HCT116 (cell line): ENCODE measurements at regions of chr3 and their contacts with region 1.

Region 1: DNA sequence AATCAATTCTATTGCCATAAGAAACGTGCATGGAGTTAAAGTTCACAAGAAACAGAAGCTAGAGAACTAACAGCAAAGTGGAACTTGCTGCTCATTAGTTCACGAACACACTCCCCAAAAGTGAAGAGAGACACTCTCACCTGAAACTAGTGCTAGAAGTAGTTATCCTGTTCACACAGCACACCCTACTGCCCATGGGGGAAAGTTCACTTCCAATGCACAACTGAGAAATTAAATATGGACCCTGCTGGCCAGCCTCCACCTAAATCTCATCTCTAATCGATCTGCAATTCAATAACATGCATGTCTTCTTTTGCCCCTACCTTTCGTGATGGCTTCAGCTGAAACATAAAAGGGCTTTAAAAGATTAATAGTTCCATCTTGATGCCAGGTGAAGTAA is 39.4 kb upstream of the FRMD4B start:
- DNase-seq: peak; percentile 21
- ATAC-seq: peak; percentile 82
- H3K4me3 ChIP-seq: no peak overlapping the region
- H3K27ac ChIP-seq: no peak overlapping the region
- H3K4me1 ChIP-seq: peaks cover 0 to 4% of the 10 kb centered on the region in 2 experiments; a peak in 1 of 4 replicates
- H3K27me3 ChIP-seq: no peaks in the 10 kb centered on the region
- CTCF ChIP-seq: peak; percentile 34 to 60 (median 56); a peak in 5 of 6 replicates
- POLR2A ChIP-seq: no peak
- RAD21 ChIP-seq: peak; percentile 60

Region 2: DNA sequence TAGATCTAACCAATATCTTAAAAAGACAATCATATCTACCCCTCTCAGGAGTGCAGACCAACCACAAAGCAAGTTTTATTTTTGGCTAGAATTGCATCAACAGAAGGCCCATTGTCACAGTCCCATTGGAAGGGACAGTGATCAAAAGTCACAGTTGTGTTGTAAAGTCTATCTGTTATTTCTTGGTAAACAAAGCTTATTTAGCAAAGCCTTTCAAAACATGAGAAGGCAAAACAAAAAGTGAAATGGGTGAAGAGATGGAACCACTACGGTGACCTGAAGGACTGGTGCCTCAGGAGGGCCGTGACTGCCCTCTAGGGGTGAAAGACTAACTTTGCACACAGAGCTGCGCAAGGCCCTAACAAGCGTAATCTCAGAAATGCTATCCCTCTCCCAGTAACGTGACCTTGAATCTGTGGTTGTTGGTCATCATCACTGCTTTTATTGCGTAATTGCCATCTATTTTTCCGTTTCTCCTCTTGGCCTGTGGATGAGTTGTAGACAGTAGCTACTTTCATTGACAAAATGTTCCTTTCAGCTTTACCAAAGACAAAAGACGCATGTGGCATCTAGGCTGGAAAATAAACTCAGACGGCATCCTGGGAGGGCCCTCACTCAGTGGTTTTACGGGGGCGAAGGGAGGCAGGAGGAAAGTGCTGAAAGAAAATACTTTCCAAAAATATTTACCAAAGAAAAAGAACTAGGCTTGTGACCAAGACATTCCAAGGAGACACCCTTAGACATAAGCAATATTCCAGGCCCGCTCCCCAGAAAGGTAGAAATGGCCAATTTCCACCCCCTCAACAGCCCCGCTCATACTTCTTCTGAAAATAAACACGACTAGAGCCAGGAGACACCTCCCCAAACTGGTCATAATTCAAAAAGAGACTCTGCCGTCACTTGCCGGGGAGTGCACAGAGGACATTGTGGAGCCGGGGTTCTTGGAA is 118.7 kb before region 1 on chr3:
- CTCF ChIA-PET with region 1: interaction called, 10 read pairs
- POLR2A ChIA-PET with region 1: no interaction called
- RAD21 ChIA-PET with region 1: interaction called in 1 of 2 experiments, 3 read pairs
- intact Hi-C with region 1: no loop called
- DNase-seq: peak; percentile 59
- ATAC-seq: peak; percentile 99
- H3K4me3 ChIP-seq: no peak overlapping the region
- H3K27ac ChIP-seq: no peak overlapping the region
- H3K4me1 ChIP-seq: 0 out of 4 replicates have a peak, but pooled peaks cover 0 to 3% of the 10 kb centered on the region in 2 experiments
- H3K27me3 ChIP-seq: no peaks in the 10 kb centered on the region
- CTCF ChIP-seq: peak; percentile 80 to 93 (median 89)
- POLR2A ChIP-seq: no peak
- RAD21 ChIP-seq: peak; percentile 91

Region 3: GRCh38 chr3:69324362-69325025 is 100.8 kb before region 1 on chr3:
- CTCF ChIA-PET with region 1: interaction called, 4 read pairs
- POLR2A ChIA-PET with region 1: no interaction called
- RAD21 ChIA-PET with region 1: no interaction called
- intact Hi-C with region 1: loop called (anchors 1 kb)
- DNase-seq: no peak
- ATAC-seq: peak; percentile 80
- H3K4me3 ChIP-seq: no peak overlapping the region
- H3K27ac ChIP-seq: no peak overlapping the region
- H3K4me1 ChIP-seq: no peaks in the 10 kb centered on the region
- H3K27me3 ChIP-seq: no peaks in the 10 kb centered on the region
- CTCF ChIP-seq: peak; percentile 12 to 46 (median 41); a peak in 5 of 6 replicates
- POLR2A ChIP-seq: no peak
- RAD21 ChIP-seq: peak; percentile 52